Left colon (tissue), 2 donors: ENCODE measurements at regions of chr7 and their contacts with region 1.

Region 1: GRCh38 chr7:154927624-154928143 is 75.2 kb downstream of the PAXIP1 start:
- DNase-seq: peak; percentile 81 to 92
- ATAC-seq: peak; percentile 73

Region 2: DNA sequence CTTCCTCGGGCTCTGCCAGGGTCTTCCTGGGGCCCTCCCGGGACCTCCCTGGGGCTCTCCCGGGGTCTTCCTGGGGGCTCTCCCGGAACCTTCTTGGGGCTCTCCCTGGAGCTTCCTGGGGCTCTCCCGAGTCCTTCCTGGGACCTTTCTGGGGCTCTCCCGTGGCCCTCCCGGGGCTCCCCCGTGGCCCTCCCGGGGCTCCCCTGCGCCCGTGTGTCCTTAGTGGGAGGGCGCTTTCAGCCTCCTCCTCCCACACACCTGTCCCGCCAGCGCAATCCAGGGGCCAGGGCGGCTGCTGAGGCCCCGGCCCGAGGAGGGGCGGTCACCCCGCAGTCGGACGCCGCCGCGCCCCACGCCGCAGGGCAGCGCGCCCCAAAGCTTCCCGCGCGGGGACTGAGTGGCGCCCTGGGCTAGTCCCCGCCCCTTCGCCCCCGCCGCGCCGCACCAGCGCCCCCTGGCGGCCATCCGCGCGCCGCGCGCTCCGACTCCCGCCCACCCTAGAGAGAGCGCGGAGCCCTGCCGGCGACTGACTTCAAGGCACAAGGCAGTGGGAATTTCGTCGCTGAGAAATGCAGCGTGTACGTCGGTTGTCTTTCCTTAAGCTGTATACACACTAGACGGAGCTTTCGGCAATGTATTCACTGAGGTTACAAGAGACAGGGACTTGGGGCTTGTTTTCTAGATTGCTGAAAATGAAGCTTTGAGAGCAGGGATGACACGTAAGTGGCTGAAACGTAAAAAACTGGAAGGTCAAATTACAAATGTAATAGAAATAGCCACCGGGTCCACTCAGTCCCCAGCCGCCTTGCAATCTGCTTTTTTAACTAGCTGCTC is 417.1 kb after region 1 on chr7:
- intact Hi-C with region 1: loop called in 1 of 2 experiments (anchors 2 kb)
- DNase-seq: peak in 1 of 2 donors; percentile 78
- ATAC-seq: peak; percentile 96